ENCODE measurements at regions of chr10 and their contacts with region 1.

Region 1: DNA sequence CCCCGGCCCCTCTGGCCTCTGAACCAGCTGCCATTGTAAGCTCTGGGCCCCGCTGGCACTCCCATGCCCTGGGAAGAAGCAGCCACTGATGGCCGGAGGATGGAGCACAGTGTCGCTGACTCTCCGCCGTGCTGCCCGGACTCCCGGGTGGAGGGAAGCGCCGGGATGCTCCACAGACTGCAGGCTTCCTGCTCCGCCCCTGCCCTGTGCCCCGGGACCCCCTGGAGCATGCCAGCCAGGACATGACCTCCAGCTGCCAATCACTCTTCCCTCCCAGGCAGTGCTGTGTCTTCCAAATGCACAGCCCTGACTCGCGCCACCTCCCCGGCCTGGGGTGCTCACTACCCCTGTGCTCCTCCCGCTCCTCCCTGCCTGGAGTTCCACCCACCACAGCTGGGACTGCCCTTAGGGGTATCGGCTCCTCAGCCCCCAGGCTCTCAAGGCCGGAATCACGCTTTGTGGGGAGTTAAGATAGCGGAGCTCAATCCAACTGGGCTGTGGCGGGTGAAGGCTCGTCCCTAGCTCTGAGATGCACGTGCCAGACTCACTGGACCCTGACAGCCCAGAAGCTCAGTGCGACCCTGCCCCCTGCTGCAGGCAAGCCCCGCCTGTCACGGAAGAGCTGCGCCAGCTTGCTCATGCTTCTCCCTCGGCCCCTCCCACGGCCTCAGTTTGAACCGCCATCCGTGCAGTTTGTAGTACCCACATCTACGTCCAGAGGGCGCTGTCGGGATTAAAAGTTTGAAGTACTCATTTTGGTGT is 142.3 kb upstream of the TCERG1L start:
- DNase-seq: peak; percentile 65 to 73 (median 68)
- ATAC-seq: peak; percentile 87
- H3K4me3 ChIP-seq: no peak overlapping the region
- H3K27ac ChIP-seq: no peak overlapping the region
- H3K4me1 ChIP-seq: peaks cover 0 to 10% of the 10 kb centered on the region in 2 experiments; a peak in 1 of 5 replicates
- H3K27me3 ChIP-seq: peaks cover 0 to 19% of the 10 kb centered on the region in 2 experiments; a peak in 1 of 5 replicates
- CTCF ChIP-seq: peak; percentile 44 to 76 (median 66); a peak in 5 of 6 replicates
- EP300 ChIP-seq: no peak
- POLR2A ChIP-seq: no peak
- RAD21 ChIP-seq: peak; percentile 12 to 48; a peak in 2 of 4 replicates

Region 2: DNA sequence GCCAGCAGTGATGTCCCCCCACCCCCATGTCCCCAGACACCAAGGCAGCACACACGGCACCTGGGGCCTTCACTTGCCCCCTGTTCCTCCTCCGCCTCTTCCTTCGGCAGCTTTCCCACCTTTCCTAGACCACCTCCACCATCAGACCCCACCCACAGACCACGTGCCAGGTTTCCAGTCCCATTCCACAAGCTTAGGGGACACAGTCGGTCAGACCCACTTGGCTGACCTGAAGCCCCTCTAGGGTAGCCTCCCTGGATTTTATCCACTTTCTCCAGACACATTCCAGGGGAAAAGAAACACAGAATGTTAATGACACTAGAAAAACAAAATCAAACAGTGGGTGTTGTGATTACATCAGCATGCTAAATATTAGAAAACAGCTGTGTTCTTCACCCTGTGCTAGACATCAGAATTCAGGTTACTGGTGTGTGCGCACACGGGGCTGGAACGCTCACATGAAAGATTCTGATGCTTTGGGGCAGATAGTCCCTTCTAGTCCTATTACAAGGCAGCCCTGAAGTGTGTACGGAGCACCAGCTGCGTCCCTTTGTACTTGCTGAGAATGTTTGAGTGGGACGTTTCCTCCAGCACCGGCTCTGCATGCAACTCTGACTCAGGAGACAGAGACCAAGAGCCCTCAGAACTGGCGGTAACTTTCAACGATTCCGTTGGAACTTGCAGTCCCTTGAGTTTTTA is 371.5 kb after region 1 on chr10:
- CTCF ChIA-PET with region 1: no interaction called
- POLR2A ChIA-PET with region 1: no interaction called
- in situ Hi-C with region 1: no loop called
- intact Hi-C with region 1: no loop called
- DNase-seq: no peak
- ATAC-seq: no peak
- H3K4me3 ChIP-seq: no peak overlapping the region
- H3K27ac ChIP-seq: no peak overlapping the region
- H3K4me1 ChIP-seq: peaks cover 0 to 7% of the 10 kb centered on the region in 2 experiments; a peak in 1 of 5 replicates
- H3K27me3 ChIP-seq: peaks cover 2 to 33% of the 10 kb centered on the region in 2 experiments; a peak in 3 of 5 replicates
- CTCF ChIP-seq: no peak
- EP300 ChIP-seq: no peak
- POLR2A ChIP-seq: no peak
- RAD21 ChIP-seq: no peak

Region 3: GRCh38 chr10:131874991-131875451 is 421.2 kb after region 1 on chr10:
- CTCF ChIA-PET with region 1: no interaction called
- POLR2A ChIA-PET with region 1: no interaction called
- in situ Hi-C with region 1: no loop called
- intact Hi-C with region 1: loop called (anchors 10 kb)
- DNase-seq: peak; percentile 72 to 76 (median 74)
- ATAC-seq: peak; percentile 94
- H3K4me3 ChIP-seq: no peak overlapping the region
- H3K27ac ChIP-seq: no peak overlapping the region
- H3K4me1 ChIP-seq: peaks cover 0 to 10% of the 10 kb centered on the region in 2 experiments; a peak in 2 of 5 replicates
- H3K27me3 ChIP-seq: peaks cover 15 to 50% of the 10 kb centered on the region in 2 experiments
- CTCF ChIP-seq: peak; percentile 75 to 82 (median 75)
- EP300 ChIP-seq: no peak
- POLR2A ChIP-seq: no peak
- RAD21 ChIP-seq: peak; percentile 58 to 77